CD4-positive, alpha-beta memory T cell (primary cell): ENCODE measurements at regions of chr7 and their contacts with region 1.

Region 1: GRCh38 chr7:129367700-129368388 is 66.4 kb upstream of the STRIP2 start:
- DNase-seq: peak; percentile 61 to 68 (median 68)
- H3K4me3 ChIP-seq: peak overlapping the region in 1 of 2 donors; percentile 32
- H3K4me3 Mint-ChIP-seq: peak overlapping the region; percentile 30 to 79 (median 63)
- H3K27ac ChIP-seq: peak overlapping the region; percentile 0
- H3K27ac Mint-ChIP-seq: peak overlapping the region in 4 of 7 donors; percentile 9 to 78 (median 56)
- H3K4me1 ChIP-seq: peaks cover 17% of the 10 kb centered on the region
- H3K4me1 Mint-ChIP-seq: peaks cover 13 to 20% (median 16%) of the 10 kb centered on the region in 4 donors
- H3K27me3 ChIP-seq: no peaks in the 10 kb centered on the region
- H3K27me3 Mint-ChIP-seq: no peaks in the 10 kb centered on the region

Region 2: GRCh38 chr7:129389829-129390228 is 22.0 kb after region 1 on chr7:
- CTCF ChIA-PET with region 1: interaction called, 32 read pairs
- POLR2A ChIA-PET with region 1: no interaction called
- intact Hi-C with region 1: no loop called
- DNase-seq: no peak
- H3K4me3 ChIP-seq: no peak overlapping the region
- H3K4me3 Mint-ChIP-seq: no peak overlapping the region
- H3K27ac ChIP-seq: no peak overlapping the region
- H3K27ac Mint-ChIP-seq: no peak overlapping the region
- H3K4me1 ChIP-seq: no peaks in the 10 kb centered on the region
- H3K4me1 Mint-ChIP-seq: peaks cover 0 to 1% (median 0%) of the 10 kb centered on the region in 4 donors
- H3K27me3 ChIP-seq: no peaks in the 10 kb centered on the region
- H3K27me3 Mint-ChIP-seq: no peaks in the 10 kb centered on the region

Region 3: DNA sequence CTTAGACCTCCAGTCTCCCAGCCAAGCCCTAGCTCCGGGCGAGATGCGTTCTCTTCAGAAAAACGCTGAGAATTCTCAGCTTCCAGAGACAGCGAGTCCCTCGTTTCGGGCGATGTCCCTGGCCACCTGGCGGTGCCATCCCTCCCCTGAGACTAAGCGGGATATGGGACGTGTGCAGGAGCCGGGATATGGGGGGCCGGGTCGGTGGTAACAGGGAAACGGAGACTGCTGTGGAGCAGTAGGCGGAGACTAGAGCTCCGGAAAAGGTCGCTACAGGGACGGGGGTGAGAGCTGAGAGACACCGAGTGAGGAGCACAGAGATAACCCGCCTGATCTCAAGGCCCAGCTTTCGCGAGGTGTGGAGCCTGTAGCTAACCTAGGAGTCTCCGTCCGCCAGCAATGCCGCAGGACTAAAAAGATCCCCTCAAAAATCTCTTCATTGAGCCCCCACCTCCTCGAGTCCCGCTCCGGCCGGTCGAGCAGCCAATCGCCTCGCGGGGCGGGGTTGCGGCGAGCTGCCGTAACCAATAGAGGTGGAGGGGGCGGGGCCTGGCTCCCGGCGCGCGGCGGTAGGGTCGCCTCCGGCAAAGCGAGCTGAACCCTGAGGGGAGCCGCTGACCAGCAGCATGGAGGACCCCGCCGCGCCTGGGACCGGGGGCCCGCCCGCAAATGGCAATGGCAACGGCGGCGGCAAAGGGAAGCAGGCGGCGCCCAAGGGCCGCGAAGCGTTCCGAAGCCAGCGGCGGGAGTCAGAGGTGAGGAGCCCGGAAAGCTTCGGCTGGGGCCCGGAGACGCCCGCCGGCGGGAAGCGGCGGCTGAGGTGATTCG is 66.2 kb after region 1 on chr7 and contains the start of gene STRIP2:
- CTCF ChIA-PET with region 1: interaction called, 12 read pairs
- POLR2A ChIA-PET with region 1: no interaction called
- intact Hi-C with region 1: no loop called
- DNase-seq: peak; percentile 84 to 90 (median 87)
- H3K4me3 ChIP-seq: peak within 1 kb of the TSS; percentile 85 to 92
- H3K4me3 Mint-ChIP-seq: peak within 1 kb of the TSS; percentile 92 to 98 (median 94)
- H3K27ac ChIP-seq: no peak within 1 kb of the TSS
- H3K27ac Mint-ChIP-seq: peak within 1 kb of the TSS; percentile 37 to 85 (median 71)
- H3K4me1 ChIP-seq: peaks cover 17% of the 10 kb centered on the region
- H3K4me1 Mint-ChIP-seq: peaks cover 3 to 21% (median 15%) of the 10 kb centered on the region in 4 donors
- H3K27me3 ChIP-seq: no peaks in the 10 kb centered on the region
- H3K27me3 Mint-ChIP-seq: peaks cover 5 to 25% of the 10 kb centered on the region in 2 donors
- total RNA-seq, gene STRIP2: 0.20 to 0.22 TPM

Region 4: DNA sequence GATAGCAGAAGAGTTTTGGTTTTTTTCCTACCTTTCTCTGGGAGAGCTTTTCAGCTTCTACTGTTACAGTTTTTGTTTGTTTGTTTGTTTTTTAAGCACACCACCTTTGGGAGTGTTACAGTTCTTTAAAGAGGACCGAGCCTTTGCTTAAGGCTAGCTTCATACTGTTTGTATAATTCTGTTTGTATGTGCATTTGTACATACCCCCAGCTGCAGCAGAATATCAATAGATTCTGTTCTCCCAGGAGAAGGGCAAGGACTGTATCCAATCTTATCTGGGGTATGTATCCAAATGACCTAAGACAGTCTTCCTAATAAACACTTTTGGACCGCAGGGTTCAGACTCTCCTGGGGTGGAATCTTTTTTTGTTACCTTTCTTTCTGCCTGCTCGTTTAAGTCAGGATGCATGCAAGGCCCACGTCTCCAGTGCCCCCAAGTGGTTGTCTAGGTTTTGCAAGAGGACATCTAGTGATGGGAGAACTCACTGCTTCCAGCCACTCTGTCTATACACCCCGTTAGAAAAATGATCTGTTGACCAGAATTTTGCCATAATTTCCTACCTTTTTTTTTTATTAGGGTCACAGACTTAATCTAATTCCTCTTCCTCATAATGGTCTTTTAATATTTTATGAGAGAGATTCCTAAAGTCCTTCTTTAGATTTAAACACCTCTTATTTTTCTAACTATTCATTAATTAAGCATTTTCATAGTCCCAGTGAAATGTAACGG is 267.6 kb after region 1 on chr7:
- CTCF ChIA-PET with region 1: interaction called, 12 read pairs
- POLR2A ChIA-PET with region 1: no interaction called
- intact Hi-C with region 1: loop called (anchors 1 kb)
- DNase-seq: peak; percentile 58 to 70 (median 63)
- H3K4me3 ChIP-seq: no peak overlapping the region
- H3K4me3 Mint-ChIP-seq: peak overlapping the region in 1 of 8 donors; percentile 21
- H3K27ac ChIP-seq: no peak overlapping the region
- H3K27ac Mint-ChIP-seq: peak overlapping the region; percentile 5 to 73 (median 60)
- H3K4me1 ChIP-seq: peaks cover 8% of the 10 kb centered on the region
- H3K4me1 Mint-ChIP-seq: peaks cover 27 to 45% (median 30%) of the 10 kb centered on the region in 4 donors
- H3K27me3 ChIP-seq: no peaks in the 10 kb centered on the region
- H3K27me3 Mint-ChIP-seq: no peaks in the 10 kb centered on the region

Region 5: DNA sequence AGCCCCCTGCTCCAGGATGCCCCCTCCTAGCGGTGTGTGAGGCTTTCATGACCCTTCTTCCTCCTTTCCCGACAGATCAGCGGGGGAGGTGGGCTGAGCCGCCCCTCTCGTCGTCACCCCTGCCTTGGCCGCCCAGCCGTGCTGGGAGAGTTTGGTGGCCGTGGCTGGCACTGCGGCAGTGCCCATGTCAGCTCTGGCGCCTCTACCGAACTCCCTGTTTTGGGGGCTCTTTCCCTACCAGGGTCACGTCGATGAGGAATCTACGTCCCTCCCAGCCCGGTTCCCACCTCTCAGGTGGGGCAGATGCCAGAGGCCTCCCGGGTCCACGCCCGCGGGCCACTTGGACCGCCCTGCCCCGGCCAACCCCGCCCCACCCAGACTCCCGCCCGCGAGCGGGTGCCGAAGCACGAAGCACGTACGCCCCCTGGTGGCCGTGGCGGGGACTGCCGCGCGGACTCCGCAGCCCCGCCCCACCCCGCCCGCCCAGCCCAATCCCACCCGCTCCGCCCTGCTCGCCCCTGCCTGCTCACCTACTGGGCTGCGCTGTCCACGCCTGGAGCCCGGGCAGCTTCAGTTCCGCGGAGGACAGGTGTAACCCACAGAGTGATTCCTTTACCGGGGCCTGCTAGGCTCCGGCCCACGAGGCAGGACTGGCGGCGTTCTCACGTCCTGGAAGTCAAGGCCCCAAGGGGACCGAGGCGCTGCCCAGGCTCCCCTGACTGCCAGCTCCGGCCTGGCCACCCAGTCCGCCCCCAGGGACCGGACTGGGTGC is 457.8 kb after region 1 on chr7:
- CTCF ChIA-PET with region 1: interaction called, 14 read pairs
- POLR2A ChIA-PET with region 1: no interaction called
- intact Hi-C with region 1: loop called (anchors 1 kb)
- DNase-seq: peak; percentile 79 to 85 (median 82)
- H3K4me3 ChIP-seq: peak overlapping the region in 1 of 2 donors; percentile 52
- H3K4me3 Mint-ChIP-seq: peak overlapping the region; percentile 83 to 92 (median 90)
- H3K27ac ChIP-seq: peak overlapping the region; percentile 40
- H3K27ac Mint-ChIP-seq: peak overlapping the region in 4 of 7 donors; percentile 42 to 80 (median 60)
- H3K4me1 ChIP-seq: peaks cover 22% of the 10 kb centered on the region
- H3K4me1 Mint-ChIP-seq: peaks cover 7 to 29% (median 17%) of the 10 kb centered on the region in 4 donors
- H3K27me3 ChIP-seq: no peaks in the 10 kb centered on the region
- H3K27me3 Mint-ChIP-seq: no peaks in the 10 kb centered on the region

Region 6: GRCh38 chr7:129926618-129927017 is 558.8 kb after region 1 on chr7:
- CTCF ChIA-PET with region 1: no interaction called
- POLR2A ChIA-PET with region 1: no interaction called
- intact Hi-C with region 1: no loop called
- DNase-seq: no peak
- H3K4me3 ChIP-seq: no peak overlapping the region
- H3K4me3 Mint-ChIP-seq: no peak overlapping the region
- H3K27ac ChIP-seq: no peak overlapping the region
- H3K27ac Mint-ChIP-seq: peak overlapping the region in 6 of 7 donors; percentile 26 to 83 (median 55)
- H3K4me1 ChIP-seq: peaks cover 16% of the 10 kb centered on the region
- H3K4me1 Mint-ChIP-seq: peaks cover 24 to 42% (median 31%) of the 10 kb centered on the region in 4 donors
- H3K27me3 ChIP-seq: no peaks in the 10 kb centered on the region
- H3K27me3 Mint-ChIP-seq: no peaks in the 10 kb centered on the region